Uterus (tissue), 4 donors: ENCODE measurements at regions of chr3 and their contacts with region 1.

Region 1: DNA sequence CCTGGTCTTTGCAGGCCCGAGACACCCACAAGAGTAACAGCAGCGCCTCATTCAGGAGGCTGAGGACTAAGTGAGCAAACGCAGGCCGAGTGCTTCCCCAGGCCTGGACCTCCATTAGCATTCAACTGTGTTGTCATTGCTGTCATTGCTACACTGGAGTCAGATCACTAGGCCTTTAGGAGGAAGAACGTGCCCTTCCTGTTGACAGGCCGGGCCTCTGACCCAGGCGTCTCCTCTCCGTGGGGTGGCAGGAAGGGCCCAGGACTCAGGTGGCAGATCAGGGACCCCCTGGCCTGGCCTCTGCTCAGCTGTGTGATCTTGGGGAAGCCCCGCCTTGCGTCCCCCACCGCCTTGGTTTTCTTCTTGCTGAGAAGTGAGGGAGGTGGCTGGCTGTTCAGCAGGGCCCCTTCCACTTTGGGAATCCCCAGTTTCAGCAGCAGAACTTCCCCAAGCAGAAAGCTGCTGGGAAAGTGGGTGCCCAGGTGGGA is 19.1 kb downstream of the ZDHHC19 start:
- DNase-seq: no peak
- H3K4me3 ChIP-seq: no peak overlapping the region
- H3K27ac ChIP-seq: peak overlapping the region in 1 of 2 donors; percentile 9
- H3K4me1 ChIP-seq: no peaks in the 10 kb centered on the region
- H3K27me3 ChIP-seq: no peaks in the 10 kb centered on the region
- CTCF ChIP-seq: no peak
- POLR2A ChIP-seq: no peak

Region 2: GRCh38 chr3:196073188-196073838 is 118.8 kb before region 1 on chr3:
- intact Hi-C with region 1: loop called (anchors 2 kb)
- DNase-seq: peak; percentile 60 to 65
- H3K4me3 ChIP-seq: no peak overlapping the region
- H3K27ac ChIP-seq: no peak overlapping the region
- H3K4me1 ChIP-seq: no peaks in the 10 kb centered on the region
- H3K27me3 ChIP-seq: no peaks in the 10 kb centered on the region
- CTCF ChIP-seq: peak; percentile 77 to 88 (median 80)
- POLR2A ChIP-seq: no peak